Transverse colon (tissue), 4 donors: ENCODE measurements at regions of chr10 and their contacts with region 1.

Region 1: GRCh38 chr10:122307669-122308486 is 36.8 kb downstream of the BTBD16 start:
- DNase-seq: peak; percentile 41
- H3K4me3 ChIP-seq: peak overlapping the region in 1 of 4 donors; percentile 5
- H3K27ac ChIP-seq: peak overlapping the region; percentile 76 to 88 (median 80)
- H3K4me1 ChIP-seq: peaks cover 12 to 45% (median 37%) of the 10 kb centered on the region in 4 donors
- H3K27me3 ChIP-seq: no peaks in the 10 kb centered on the region
- CTCF ChIP-seq: no peak
- EP300 ChIP-seq: peak; percentile 85
- POLR2A ChIP-seq: no peak

Region 2: GRCh38 chr10:122191936-122192541 is 115.8 kb before region 1 on chr10:
- in situ Hi-C with region 1: no loop called
- intact Hi-C with region 1: no loop called
- DNase-seq: no peak
- H3K4me3 ChIP-seq: no peak overlapping the region
- H3K27ac ChIP-seq: peak overlapping the region; percentile 11 to 62 (median 42)
- H3K4me1 ChIP-seq: peaks cover 5 to 19% (median 9%) of the 10 kb centered on the region in 4 donors
- H3K27me3 ChIP-seq: no peaks in the 10 kb centered on the region
- CTCF ChIP-seq: no peak
- EP300 ChIP-seq: no peak
- POLR2A ChIP-seq: no peak

Region 3: GRCh38 chr10:124313374-124313773 is 2005.5 kb after region 1 on chr10:
- in situ Hi-C with region 1: no loop called
- intact Hi-C with region 1: loop called (anchors 5 kb)
- DNase-seq: no peak
- H3K4me3 ChIP-seq: no peak overlapping the region
- H3K27ac ChIP-seq: no peak overlapping the region
- H3K4me1 ChIP-seq: no peaks in the 10 kb centered on the region
- H3K27me3 ChIP-seq: no peaks in the 10 kb centered on the region
- CTCF ChIP-seq: no peak
- EP300 ChIP-seq: no peak
- POLR2A ChIP-seq: no peak